GM12878 (cell line): ENCODE measurements at regions of chr3 and their contacts with region 1.

Region 1: GRCh38 chr3:113745273-113746068 is 578 bp downstream of the NAA50 start:
- DNase-seq: peak; percentile 72
- ATAC-seq: peak; percentile 75
- H3K4me3 ChIP-seq: peak overlapping the region; percentile 70
- H3K27ac ChIP-seq: peak overlapping the region; percentile 95
- H3K4me1 ChIP-seq: 0 out of 2 replicates have a peak, but pooled peaks cover 3% of the 10 kb centered on the region
- H3K27me3 ChIP-seq: no peaks in the 10 kb centered on the region
- CTCF ChIP-seq: peak; percentile 72 to 87 (median 73); a peak in 5 of 6 replicates
- EP300 ChIP-seq: no peak
- POLR2A ChIP-seq: 0 out of 2 replicates have a peak, but pooled peaks have one; percentile 24
- RAD21 ChIP-seq: peak; percentile 70

Region 2: GRCh38 chr3:113495035-113495434 is 250.4 kb before region 1 on chr3:
- CTCF ChIA-PET with region 1: interaction called, 48 read pairs
- POLR2A ChIA-PET with region 1: interaction called, 5 read pairs
- RAD21 ChIA-PET with region 1: interaction called, 11 read pairs
- SMC1A ChIA-PET with region 1: interaction called, 31 read pairs
- in situ Hi-C with region 1: loop called (anchors 10 kb)
- intact Hi-C with region 1: loop called (anchors 2 kb)
- DNase-seq: no peak
- ATAC-seq: peak; percentile 96
- H3K4me3 ChIP-seq: no peak overlapping the region
- H3K27ac ChIP-seq: no peak overlapping the region
- H3K4me1 ChIP-seq: no peaks in the 10 kb centered on the region; the same call in 1 of the 2 replicates
- H3K27me3 ChIP-seq: no peaks in the 10 kb centered on the region
- CTCF ChIP-seq: peak; percentile 45 to 67 (median 50); a peak in 4 of 6 replicates
- EP300 ChIP-seq: no peak
- POLR2A ChIP-seq: no peak
- RAD21 ChIP-seq: peak; percentile 71

Region 3: GRCh38 chr3:113575206-113575605 is 170.3 kb before region 1 on chr3:
- CTCF ChIA-PET with region 1: interaction called, 33 read pairs
- POLR2A ChIA-PET with region 1: no interaction called
- RAD21 ChIA-PET with region 1: interaction called, 16 read pairs
- SMC1A ChIA-PET with region 1: interaction called, 13 read pairs
- in situ Hi-C with region 1: no loop called
- intact Hi-C with region 1: no loop called
- DNase-seq: no peak
- ATAC-seq: no peak
- H3K4me3 ChIP-seq: no peak overlapping the region
- H3K27ac ChIP-seq: no peak overlapping the region
- H3K4me1 ChIP-seq: no peaks in the 10 kb centered on the region
- H3K27me3 ChIP-seq: no peaks in the 10 kb centered on the region
- CTCF ChIP-seq: no peak
- EP300 ChIP-seq: no peak
- POLR2A ChIP-seq: no peak
- RAD21 ChIP-seq: no peak

Region 4: DNA sequence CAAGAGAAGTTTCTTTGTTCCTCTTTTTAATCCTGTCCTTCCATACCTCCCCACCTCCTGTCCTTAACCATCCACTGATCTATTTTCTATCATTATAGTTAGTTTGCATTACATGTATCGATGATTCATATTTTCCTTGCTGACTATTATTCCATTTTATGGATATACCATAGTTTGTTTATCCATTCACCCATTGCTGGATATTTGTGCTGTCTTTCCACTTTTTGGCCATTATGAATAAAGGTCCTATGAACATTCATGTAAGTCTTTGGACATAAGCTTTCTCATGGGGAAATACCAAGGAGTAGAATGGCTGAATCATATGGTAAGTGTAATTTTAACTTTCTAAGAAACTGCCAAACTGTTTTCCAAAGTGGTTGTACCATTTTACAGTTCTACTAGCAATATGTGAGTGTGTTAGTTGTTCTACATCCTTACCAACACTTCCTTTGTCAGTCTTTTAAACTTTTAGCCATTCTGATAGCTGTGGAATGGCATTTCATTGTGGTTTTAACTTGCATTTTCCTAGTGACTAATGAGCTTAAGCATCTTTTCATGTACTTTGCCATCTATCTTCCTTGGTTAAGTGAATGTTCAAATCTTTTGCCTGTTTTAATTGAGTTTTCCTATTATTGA is 13.0 kb after region 1 on chr3:
- CTCF ChIA-PET with region 1: interaction called, 36 read pairs
- POLR2A ChIA-PET with region 1: interaction called, 4 read pairs
- RAD21 ChIA-PET with region 1: interaction called, 5 read pairs
- SMC1A ChIA-PET with region 1: interaction called, 11 read pairs
- in situ Hi-C with region 1: no loop called
- intact Hi-C with region 1: no loop called
- DNase-seq: no peak
- ATAC-seq: no peak
- H3K4me3 ChIP-seq: no peak overlapping the region
- H3K27ac ChIP-seq: no peak overlapping the region
- H3K4me1 ChIP-seq: peaks cover 10% of the 10 kb centered on the region; the same call in 1 of the 2 replicates
- H3K27me3 ChIP-seq: no peaks in the 10 kb centered on the region
- CTCF ChIP-seq: no peak
- EP300 ChIP-seq: no peak
- POLR2A ChIP-seq: no peak
- RAD21 ChIP-seq: no peak

Region 5: GRCh38 chr3:113825090-113825489 is 79.6 kb after region 1 on chr3:
- CTCF ChIA-PET with region 1: interaction called, 72 read pairs
- POLR2A ChIA-PET with region 1: interaction called, 24 read pairs
- RAD21 ChIA-PET with region 1: interaction called, 15 read pairs
- SMC1A ChIA-PET with region 1: interaction called, 10 read pairs
- in situ Hi-C with region 1: no loop called
- intact Hi-C with region 1: loop called (anchors 2 kb)
- DNase-seq: peak; percentile 86
- ATAC-seq: peak; percentile 85
- H3K4me3 ChIP-seq: peak overlapping the region; percentile 18; the same call in 1 of the 2 replicates
- H3K27ac ChIP-seq: peak overlapping the region; percentile 49; the same call in 1 of the 2 replicates
- H3K4me1 ChIP-seq: peaks cover 41% of the 10 kb centered on the region
- H3K27me3 ChIP-seq: no peaks in the 10 kb centered on the region
- CTCF ChIP-seq: peak in 2 of 3 experiments; percentile 39 to 40; a peak in 2 of 6 replicates
- EP300 ChIP-seq: peak; percentile 34 to 65; a peak in 2 of 4 replicates
- POLR2A ChIP-seq: no peak
- RAD21 ChIP-seq: no peak

Region 6: DNA sequence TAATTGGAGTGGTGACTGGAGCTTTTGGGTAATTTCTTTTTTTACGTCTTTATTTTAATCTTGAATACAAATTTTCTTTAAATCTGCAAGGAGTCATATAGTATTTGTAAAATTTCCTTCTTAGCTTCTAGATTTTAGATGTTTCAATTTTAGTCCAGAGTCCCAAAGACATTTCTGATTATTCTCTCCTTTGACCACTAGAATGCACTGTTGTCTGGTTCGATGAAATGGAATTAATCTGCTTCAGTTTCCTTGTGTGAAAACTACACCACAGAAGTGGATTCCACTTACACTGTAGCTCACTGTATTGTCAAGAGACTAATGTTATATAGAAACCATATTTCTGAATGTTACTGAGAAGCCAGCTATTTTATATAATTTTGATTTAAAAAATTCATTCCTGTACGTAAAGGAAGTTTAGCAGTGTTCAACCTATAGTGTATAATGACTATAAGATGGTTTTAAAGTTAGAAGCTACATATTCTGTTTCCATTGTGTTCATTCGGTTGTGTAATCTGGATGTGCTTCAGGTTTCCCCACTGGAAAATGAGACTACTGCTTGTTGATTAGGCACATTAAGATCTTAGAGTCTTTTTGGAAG is 99.3 kb after region 1 on chr3:
- CTCF ChIA-PET with region 1: interaction called, 34 read pairs
- POLR2A ChIA-PET with region 1: interaction called, 5 read pairs
- RAD21 ChIA-PET with region 1: interaction called, 9 read pairs
- SMC1A ChIA-PET with region 1: interaction called, 6 read pairs
- in situ Hi-C with region 1: no loop called
- intact Hi-C with region 1: loop called (anchors 2 kb)
- DNase-seq: no peak
- ATAC-seq: peak; percentile 78
- H3K4me3 ChIP-seq: no peak overlapping the region
- H3K27ac ChIP-seq: no peak overlapping the region
- H3K4me1 ChIP-seq: no peaks in the 10 kb centered on the region
- H3K27me3 ChIP-seq: no peaks in the 10 kb centered on the region
- CTCF ChIP-seq: peak; percentile 40 to 58 (median 48)
- EP300 ChIP-seq: no peak
- POLR2A ChIP-seq: no peak
- RAD21 ChIP-seq: peak; percentile 64

Region 7: GRCh38 chr3:114022153-114022802 is 276.8 kb after region 1 on chr3:
- CTCF ChIA-PET with region 1: no interaction called
- POLR2A ChIA-PET with region 1: no interaction called
- RAD21 ChIA-PET with region 1: no interaction called
- SMC1A ChIA-PET with region 1: no interaction called
- in situ Hi-C with region 1: no loop called
- intact Hi-C with region 1: no loop called
- DNase-seq: no peak
- ATAC-seq: no peak
- H3K4me3 ChIP-seq: no peak overlapping the region
- H3K27ac ChIP-seq: no peak overlapping the region
- H3K4me1 ChIP-seq: no peaks in the 10 kb centered on the region
- H3K27me3 ChIP-seq: no peaks in the 10 kb centered on the region
- CTCF ChIP-seq: no peak
- EP300 ChIP-seq: no peak
- POLR2A ChIP-seq: no peak
- RAD21 ChIP-seq: no peak

Region 8: GRCh38 chr3:114213627-114214541 is 468.4 kb after region 1 on chr3:
- CTCF ChIA-PET with region 1: no interaction called
- POLR2A ChIA-PET with region 1: no interaction called
- RAD21 ChIA-PET with region 1: no interaction called
- SMC1A ChIA-PET with region 1: no interaction called
- in situ Hi-C with region 1: no loop called
- intact Hi-C with region 1: loop called (anchors 10 kb)
- DNase-seq: peak; percentile 84
- ATAC-seq: peak; percentile 91
- H3K4me3 ChIP-seq: peak overlapping the region; percentile 63
- H3K27ac ChIP-seq: peak overlapping the region; percentile 88
- H3K4me1 ChIP-seq: peaks cover 20% of the 10 kb centered on the region
- H3K27me3 ChIP-seq: no peaks in the 10 kb centered on the region; a peak in 1 of 4 replicates
- CTCF ChIP-seq: no peak
- EP300 ChIP-seq: peak; percentile 86 to 91
- POLR2A ChIP-seq: peak; percentile 74
- RAD21 ChIP-seq: no peak